Dendritic cell treated with granulocyte-macrophage colony-stimulating factor and Interleukin-4, amounts not matched to agents 40 ng/mL and 50 ng/mL, for 4 days (primary cell): ENCODE measurements at regions of chr9 and their contacts with region 1.

Region 1: GRCh38 chr9:101727612-101728524 is 10.6 kb downstream of the GRIN3A start:
- H3K4me3 Mint-ChIP-seq: no peak overlapping the region
- H3K27ac Mint-ChIP-seq: no peak overlapping the region
- H3K4me1 Mint-ChIP-seq: no peaks in the 10 kb centered on the region
- H3K27me3 Mint-ChIP-seq: peaks cover 16% of the 10 kb centered on the region

Region 2: GRCh38 chr9:101601904-101602765 is 125.7 kb before region 1 on chr9:
- intact Hi-C with region 1: loop called (anchors 1 kb)
- H3K4me3 Mint-ChIP-seq: no peak overlapping the region
- H3K27ac Mint-ChIP-seq: no peak overlapping the region
- H3K4me1 Mint-ChIP-seq: peaks cover 6% of the 10 kb centered on the region
- H3K27me3 Mint-ChIP-seq: peaks cover 5% of the 10 kb centered on the region

Region 3: DNA sequence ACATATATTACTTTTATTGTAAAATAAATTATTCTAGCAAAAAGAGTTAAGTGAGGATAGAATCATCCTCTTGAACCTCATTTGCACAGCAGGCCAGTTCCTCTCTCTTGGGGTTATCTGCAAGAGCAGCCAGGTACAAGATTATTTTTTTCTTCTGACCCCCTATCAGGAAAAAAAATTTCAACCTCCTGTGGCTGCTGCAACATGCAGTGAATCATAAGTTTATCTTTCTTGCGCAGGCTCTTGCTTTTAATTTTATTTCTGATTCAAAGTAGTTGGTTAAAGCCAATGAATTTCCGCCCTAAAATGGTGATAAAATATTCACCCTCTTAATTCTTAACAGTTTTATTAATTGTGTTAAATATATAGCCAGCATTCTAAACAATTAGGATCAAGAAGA is 63.4 kb before region 1 on chr9:
- intact Hi-C with region 1: no loop called
- H3K4me3 Mint-ChIP-seq: no peak overlapping the region
- H3K27ac Mint-ChIP-seq: no peak overlapping the region
- H3K4me1 Mint-ChIP-seq: no peaks in the 10 kb centered on the region
- H3K27me3 Mint-ChIP-seq: peaks cover 1% of the 10 kb centered on the region

Region 4: GRCh38 chr9:101738566-101739183 is 10.8 kb after region 1 on chr9 and contains the start of gene GRIN3A:
- intact Hi-C with region 1: no loop called
- H3K4me3 Mint-ChIP-seq: peak within 1 kb of the TSS; percentile 57
- H3K27ac Mint-ChIP-seq: no peak within 1 kb of the TSS
- H3K4me1 Mint-ChIP-seq: peaks cover 5% of the 10 kb centered on the region
- H3K27me3 Mint-ChIP-seq: peaks cover 51% of the 10 kb centered on the region